ENCODE measurements at regions of chr5 and their contacts with region 1.

Region 1: DNA sequence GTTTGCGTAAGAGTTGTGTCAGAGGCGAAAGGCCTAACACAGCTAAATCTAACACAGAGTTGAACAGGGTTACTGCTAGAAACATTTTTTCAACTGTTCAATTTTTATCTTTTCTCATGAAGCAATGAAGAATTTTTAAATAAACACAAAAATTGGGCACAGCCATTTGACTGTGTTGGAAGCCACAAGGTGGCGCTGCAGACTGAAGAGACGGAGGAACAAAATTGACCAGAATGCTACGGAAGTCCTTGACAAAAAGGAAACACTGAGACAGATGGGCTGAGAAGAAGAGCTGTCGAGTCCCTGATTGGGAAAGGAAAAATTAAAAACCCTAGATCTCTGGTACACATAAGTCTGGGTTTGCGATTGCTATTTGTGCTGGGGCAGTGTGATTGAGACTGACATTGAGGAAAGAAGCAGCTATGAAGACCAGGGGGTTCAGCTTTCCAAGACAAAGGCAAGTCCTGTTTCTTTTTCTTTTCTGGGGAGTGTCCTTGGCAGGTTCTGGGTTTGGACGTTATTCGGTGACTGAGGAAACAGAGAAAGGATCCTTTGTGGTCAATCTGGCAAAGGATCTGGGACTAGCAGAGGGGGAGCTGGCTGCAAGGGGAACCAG is at the start of gene PCDHB9:
- DNase-seq: peak in 1 of 2 experiments; percentile 80
- H3K4me3 ChIP-seq: peak within 1 kb of the TSS in 2 of 4 experiments; percentile 11 to 27; a peak in 1 of 8 replicates
- H3K27ac ChIP-seq: no peak within 1 kb of the TSS
- H3K4me1 ChIP-seq: 0 out of 7 replicates have a peak, but pooled peaks cover 0 to 2% (median 0%) of the 10 kb centered on the region in 4 experiments
- H3K27me3 ChIP-seq: no peaks in the 10 kb centered on the region
- CTCF ChIP-seq: peak; percentile 53 to 83 (median 81)
- EP300 ChIP-seq: no peak
- POLR2A ChIP-seq: no peak
- RAD21 ChIP-seq: peak; percentile 52 to 61
- total RNA-seq, gene PCDHB9: 1.6 and 3.8 TPM in 2 replicates

Region 2: GRCh38 chr5:140916349-140916748 is 270.7 kb before region 1 on chr5:
- CTCF ChIA-PET with region 1: no interaction called
- POLR2A ChIA-PET with region 1: no interaction called
- DNase-seq: no peak
- H3K4me3 ChIP-seq: no peak overlapping the region
- H3K27ac ChIP-seq: no peak overlapping the region
- H3K4me1 ChIP-seq: no peaks in the 10 kb centered on the region
- H3K27me3 ChIP-seq: no peaks in the 10 kb centered on the region
- CTCF ChIP-seq: no peak
- EP300 ChIP-seq: no peak
- POLR2A ChIP-seq: no peak
- RAD21 ChIP-seq: no peak

Region 3: DNA sequence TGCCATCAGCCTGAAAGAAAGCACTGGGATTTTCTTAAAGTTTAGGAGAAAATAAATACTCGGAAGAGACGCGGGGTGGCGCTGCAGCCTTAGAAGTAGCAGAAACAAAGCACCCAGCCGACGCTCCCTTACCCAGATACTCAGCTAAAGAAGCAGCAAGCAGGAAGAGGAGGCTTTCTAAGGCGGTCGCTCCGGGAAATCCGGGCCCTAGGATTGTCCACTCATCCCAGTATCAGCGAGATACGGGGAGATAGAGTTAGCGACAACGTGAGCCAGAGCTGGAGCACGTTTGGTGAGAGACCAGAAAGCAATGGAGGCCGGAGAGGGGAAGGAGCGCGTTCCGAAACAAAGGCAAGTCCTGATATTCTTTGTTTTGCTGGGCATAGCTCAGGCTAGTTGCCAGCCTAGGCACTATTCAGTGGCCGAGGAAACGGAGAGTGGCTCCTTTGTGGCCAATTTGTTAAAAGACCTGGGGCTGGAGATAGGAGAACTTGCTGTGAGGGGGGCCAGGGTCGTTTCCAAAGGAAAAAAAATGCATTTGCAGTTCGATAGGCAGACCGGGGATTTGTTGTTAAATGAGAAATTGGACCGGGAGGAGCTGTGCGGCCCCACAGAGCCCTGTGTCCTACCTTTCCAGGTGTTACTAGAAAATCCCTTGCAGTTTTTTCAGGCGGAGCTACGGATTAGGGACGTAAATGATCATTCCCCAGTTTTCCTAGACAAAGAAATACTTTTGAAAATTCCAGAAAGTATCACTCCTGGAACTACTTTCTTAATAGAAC is 92.3 kb before region 1 on chr5 and contains the start of gene PCDHB2:
- CTCF ChIA-PET with region 1: interaction called, 16 read pairs
- POLR2A ChIA-PET with region 1: interaction called, 3 read pairs
- DNase-seq: peak; percentile 75 to 84
- H3K4me3 ChIP-seq: peak within 1 kb of the TSS; percentile 80 to 99 (median 92)
- H3K27ac ChIP-seq: peak within 1 kb of the TSS; percentile 91
- H3K4me1 ChIP-seq: no peaks in the 10 kb centered on the region; a peak in 2 of 7 replicates
- H3K27me3 ChIP-seq: no peaks in the 10 kb centered on the region
- CTCF ChIP-seq: peak; percentile 56 to 85 (median 83)
- EP300 ChIP-seq: no peak
- POLR2A ChIP-seq: peak; percentile 77 to 96
- RAD21 ChIP-seq: peak; percentile 76 to 82
- total RNA-seq, gene PCDHB2: 25.6 and 28.8 TPM in 2 replicates

Region 4: DNA sequence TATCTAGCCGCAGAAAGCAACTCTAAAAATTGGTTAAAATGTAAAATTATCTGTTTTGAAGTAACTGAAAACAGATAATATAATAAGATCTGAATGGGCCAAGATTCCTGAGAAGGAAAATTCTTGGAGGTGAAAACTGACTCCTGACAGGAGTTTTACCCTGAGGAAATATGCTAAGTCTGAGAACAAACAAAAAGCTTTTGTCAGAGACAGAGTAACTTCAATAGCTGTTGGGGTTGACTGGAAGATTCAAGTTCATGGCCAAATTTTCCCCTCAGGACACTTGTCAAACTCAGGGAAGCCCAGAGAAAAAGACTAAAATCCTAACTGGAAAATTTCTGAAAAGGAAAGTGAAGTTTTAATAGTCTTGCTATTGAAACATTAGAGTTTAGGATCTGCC is 59.7 kb before region 1 on chr5:
- CTCF ChIA-PET with region 1: interaction called, 22 read pairs
- POLR2A ChIA-PET with region 1: no interaction called
- DNase-seq: no peak
- H3K4me3 ChIP-seq: no peak overlapping the region
- H3K27ac ChIP-seq: no peak overlapping the region
- H3K4me1 ChIP-seq: no peaks in the 10 kb centered on the region
- H3K27me3 ChIP-seq: no peaks in the 10 kb centered on the region
- CTCF ChIP-seq: no peak
- EP300 ChIP-seq: no peak
- POLR2A ChIP-seq: no peak
- RAD21 ChIP-seq: no peak

Region 5: DNA sequence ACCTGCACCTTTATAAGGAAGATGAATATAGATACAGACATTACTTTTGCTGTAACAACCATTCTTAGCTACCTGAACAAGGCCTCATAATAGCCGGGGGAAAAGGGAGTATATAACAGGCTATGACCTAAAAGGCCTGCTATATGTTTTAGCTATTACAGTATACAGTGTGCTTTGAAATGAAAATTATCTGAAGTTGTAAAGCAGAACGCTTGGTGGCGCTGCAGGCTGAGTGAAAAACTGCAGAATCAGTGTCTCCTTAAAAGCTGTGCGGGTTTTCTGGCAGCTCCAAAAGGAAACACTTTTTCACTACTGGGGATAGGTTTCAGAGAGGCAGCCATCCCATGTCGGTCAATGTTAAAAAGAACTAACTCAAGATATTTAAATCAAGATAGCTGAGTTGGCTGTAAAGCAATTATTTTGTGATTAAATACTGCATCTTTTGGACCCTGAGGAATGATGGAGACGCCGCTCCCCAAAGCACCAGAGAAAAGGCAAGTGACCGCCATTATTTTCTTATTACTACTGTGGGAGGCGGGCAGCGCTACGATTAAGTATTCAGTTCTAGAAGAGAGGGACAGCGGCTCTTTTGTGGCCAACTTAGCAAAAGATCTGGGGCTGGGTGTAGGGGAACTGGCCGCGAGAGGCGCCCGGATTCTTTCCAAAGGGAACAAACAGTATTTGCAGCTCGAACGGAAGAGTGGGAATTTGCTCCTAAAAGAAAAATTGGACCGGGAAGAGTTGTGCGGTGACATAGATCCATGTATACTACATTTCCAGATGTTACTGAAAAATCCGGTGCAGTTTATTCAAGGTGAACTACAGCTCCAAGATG is 31.2 kb before region 1 on chr5:
- CTCF ChIA-PET with region 1: interaction called, 35 read pairs
- POLR2A ChIA-PET with region 1: no interaction called
- DNase-seq: peak in 1 of 2 experiments; percentile 67
- H3K4me3 ChIP-seq: no peak overlapping the region
- H3K27ac ChIP-seq: no peak overlapping the region
- H3K4me1 ChIP-seq: no peaks in the 10 kb centered on the region
- H3K27me3 ChIP-seq: no peaks in the 10 kb centered on the region
- CTCF ChIP-seq: peak in 2 of 3 experiments; percentile 70 to 72; a peak in 3 of 4 replicates
- EP300 ChIP-seq: no peak
- POLR2A ChIP-seq: no peak
- RAD21 ChIP-seq: peak; percentile 58 to 69

Region 6: GRCh38 chr5:141199359-141200235 is 12.6 kb after region 1 on chr5 and contains the start of gene PCDHB11:
- CTCF ChIA-PET with region 1: interaction called, 39 read pairs
- POLR2A ChIA-PET with region 1: no interaction called
- DNase-seq: no peak
- H3K4me3 ChIP-seq: peak within 1 kb of the TSS in 1 of 4 experiments; percentile 25; a peak in 2 of 8 replicates
- H3K27ac ChIP-seq: no peak within 1 kb of the TSS
- H3K4me1 ChIP-seq: no peaks in the 10 kb centered on the region
- H3K27me3 ChIP-seq: no peaks in the 10 kb centered on the region
- CTCF ChIP-seq: peak in 2 of 3 experiments; percentile 55 to 66; a peak in 3 of 4 replicates
- EP300 ChIP-seq: no peak
- POLR2A ChIP-seq: no peak
- RAD21 ChIP-seq: peak; percentile 68 to 73
- total RNA-seq, gene PCDHB11: 0.86 and 1.4 TPM in 2 replicates

Region 7: GRCh38 chr5:142324871-142325724 is 1138.1 kb after region 1 on chr5 and contains the start of gene SPRY4:
- CTCF ChIA-PET with region 1: no interaction called
- POLR2A ChIA-PET with region 1: no interaction called
- DNase-seq: peak; percentile 94 to 96
- H3K4me3 ChIP-seq: peak within 1 kb of the TSS; percentile 51 to 95 (median 90)
- H3K27ac ChIP-seq: peak within 1 kb of the TSS; percentile 90
- H3K4me1 ChIP-seq: peaks cover 17 to 31% (median 22%) of the 10 kb centered on the region in 4 experiments
- H3K27me3 ChIP-seq: peaks cover 0 to 5% (median 0%) of the 10 kb centered on the region in 4 experiments; a peak in 2 of 7 replicates
- CTCF ChIP-seq: peak in 1 of 3 experiments; percentile 2; a peak in 1 of 4 replicates
- EP300 ChIP-seq: peak in 1 of 2 experiments; percentile 68; a peak in 1 of 3 replicates
- POLR2A ChIP-seq: peak in 1 of 2 experiments; percentile 88; a peak in 2 of 3 replicates
- RAD21 ChIP-seq: peak in 1 of 2 experiments; percentile 18; a peak in 1 of 4 replicates
- total RNA-seq, gene SPRY4: 98.2 and 113 TPM in 2 replicates

Measured in H1 (cell line).